HCT116 (cell line): ENCODE measurements at regions of chr11 and their contacts with region 1.

Region 1: DNA sequence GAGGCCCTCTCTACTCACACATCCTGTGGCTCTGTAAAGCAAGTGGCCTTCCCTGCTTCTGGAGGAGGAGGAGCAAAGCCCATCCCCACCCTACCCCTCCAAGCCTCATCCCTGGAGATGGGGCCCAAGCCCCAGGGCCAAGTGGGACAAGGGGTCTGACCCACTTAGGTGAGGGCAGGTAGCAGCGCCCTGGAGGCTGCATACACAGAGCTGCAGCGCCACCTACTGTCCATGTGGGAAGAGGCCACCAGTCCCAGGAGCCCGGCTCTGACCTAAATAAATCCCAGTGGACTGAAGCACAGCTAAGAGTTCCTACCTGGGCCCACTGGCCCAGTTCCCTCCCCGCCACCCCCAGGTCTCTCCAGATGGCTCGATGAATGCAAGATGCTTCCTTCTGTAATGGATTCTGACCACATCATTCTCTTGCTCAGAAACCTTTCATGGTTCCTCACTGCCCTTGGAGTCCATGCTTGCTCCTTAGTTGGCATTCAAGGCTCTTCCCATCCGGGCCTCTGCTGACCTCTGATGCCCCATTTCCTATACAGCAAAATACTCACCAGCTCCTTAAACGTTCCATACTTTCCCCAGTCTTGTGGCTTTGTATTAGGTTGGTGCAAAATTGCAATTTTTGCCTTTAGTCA is 62.1 kb downstream of the THAP12 start:
- DNase-seq: peak; percentile 55
- ATAC-seq: peak; percentile 99
- H3K4me3 ChIP-seq: no peak overlapping the region
- H3K27ac ChIP-seq: no peak overlapping the region
- H3K4me1 ChIP-seq: peaks cover 0 to 10% of the 10 kb centered on the region in 2 experiments; a peak in 1 of 4 replicates
- H3K27me3 ChIP-seq: no peaks in the 10 kb centered on the region
- CTCF ChIP-seq: peak; percentile 88 to 92 (median 91)
- POLR2A ChIP-seq: no peak
- RAD21 ChIP-seq: peak; percentile 98

Region 2: GRCh38 chr11:75597636-75598035 is 721.2 kb before region 1 on chr11:
- CTCF ChIA-PET with region 1: interaction called, 6 read pairs
- POLR2A ChIA-PET with region 1: no interaction called
- RAD21 ChIA-PET with region 1: no interaction called
- intact Hi-C with region 1: loop called (anchors 5 kb)
- DNase-seq: peak; percentile 36
- ATAC-seq: peak; percentile 99
- H3K4me3 ChIP-seq: no peak overlapping the region
- H3K27ac ChIP-seq: no peak overlapping the region
- H3K4me1 ChIP-seq: no peaks in the 10 kb centered on the region
- H3K27me3 ChIP-seq: peaks cover 6% of the 10 kb centered on the region; the same call in 1 of the 2 replicates
- CTCF ChIP-seq: peak; percentile 49 to 87 (median 81); a peak in 5 of 6 replicates
- POLR2A ChIP-seq: no peak
- RAD21 ChIP-seq: peak; percentile 55

Region 3: GRCh38 chr11:75802913-75803820 is 515.7 kb before region 1 on chr11:
- CTCF ChIA-PET with region 1: interaction called, 6 read pairs
- POLR2A ChIA-PET with region 1: no interaction called
- RAD21 ChIA-PET with region 1: no interaction called
- intact Hi-C with region 1: loop called (anchors 2 kb)
- DNase-seq: peak; percentile 46
- ATAC-seq: peak; percentile 98
- H3K4me3 ChIP-seq: no peak overlapping the region
- H3K27ac ChIP-seq: no peak overlapping the region
- H3K4me1 ChIP-seq: no peaks in the 10 kb centered on the region
- H3K27me3 ChIP-seq: no peaks in the 10 kb centered on the region
- CTCF ChIP-seq: peak; percentile 77 to 93 (median 89)
- POLR2A ChIP-seq: no peak
- RAD21 ChIP-seq: peak; percentile 80

Region 4: GRCh38 chr11:76207642-76208401 is 111.0 kb before region 1 on chr11:
- CTCF ChIA-PET with region 1: interaction called, 62 read pairs
- POLR2A ChIA-PET with region 1: no interaction called
- RAD21 ChIA-PET with region 1: interaction called, 12 to 14 read pairs
- intact Hi-C with region 1: loop called (anchors 1 kb)
- DNase-seq: peak; percentile 51
- ATAC-seq: peak; percentile 79
- H3K4me3 ChIP-seq: peak overlapping the region; percentile 12 to 41
- H3K27ac ChIP-seq: no peak overlapping the region
- H3K4me1 ChIP-seq: peaks cover 8 to 42% of the 10 kb centered on the region in 2 experiments
- H3K27me3 ChIP-seq: peaks cover 13% of the 10 kb centered on the region; the same call in 1 of the 2 replicates
- CTCF ChIP-seq: peak; percentile 84 to 95 (median 91)
- POLR2A ChIP-seq: no peak
- RAD21 ChIP-seq: peak; percentile 95

Region 5: GRCh38 chr11:76266270-76267090 is 52.4 kb before region 1 on chr11:
- CTCF ChIA-PET with region 1: no interaction called
- POLR2A ChIA-PET with region 1: no interaction called
- RAD21 ChIA-PET with region 1: no interaction called
- intact Hi-C with region 1: no loop called
- DNase-seq: peak; percentile 10
- ATAC-seq: peak; percentile 61
- H3K4me3 ChIP-seq: no peak overlapping the region
- H3K27ac ChIP-seq: no peak overlapping the region
- H3K4me1 ChIP-seq: peaks cover 0 to 12% of the 10 kb centered on the region in 2 experiments; a peak in 2 of 4 replicates
- H3K27me3 ChIP-seq: no peaks in the 10 kb centered on the region
- CTCF ChIP-seq: no peak
- POLR2A ChIP-seq: no peak
- RAD21 ChIP-seq: no peak

Region 6: GRCh38 chr11:76296731-76297542 is 21.9 kb before region 1 on chr11:
- CTCF ChIA-PET with region 1: no interaction called
- POLR2A ChIA-PET with region 1: no interaction called
- RAD21 ChIA-PET with region 1: no interaction called
- intact Hi-C with region 1: no loop called
- DNase-seq: no peak
- ATAC-seq: peak; percentile 82
- H3K4me3 ChIP-seq: no peak overlapping the region
- H3K27ac ChIP-seq: no peak overlapping the region
- H3K4me1 ChIP-seq: no peaks in the 10 kb centered on the region; a peak in 1 of 4 replicates
- H3K27me3 ChIP-seq: no peaks in the 10 kb centered on the region
- CTCF ChIP-seq: no peak
- POLR2A ChIP-seq: no peak
- RAD21 ChIP-seq: no peak